ENCODE measurements at regions of chr12 and their contacts with region 1.

Region 1: GRCh38 chr12:53441040-53441833 is at the start of gene PRR13:
- DNase-seq: peak; percentile 88
- ATAC-seq: peak; percentile 98
- H3K4me3 Mint-ChIP-seq: peak within 1 kb of the TSS; percentile 93
- H3K27ac Mint-ChIP-seq: peak within 1 kb of the TSS; percentile 93
- H3K4me1 Mint-ChIP-seq: peaks cover 40% of the 10 kb centered on the region
- H3K27me3 Mint-ChIP-seq: no peaks in the 10 kb centered on the region
- CTCF ChIP-seq: no peak
- total RNA-seq, gene PRR13: 266 and 288 TPM in 2 replicates

Region 2: DNA sequence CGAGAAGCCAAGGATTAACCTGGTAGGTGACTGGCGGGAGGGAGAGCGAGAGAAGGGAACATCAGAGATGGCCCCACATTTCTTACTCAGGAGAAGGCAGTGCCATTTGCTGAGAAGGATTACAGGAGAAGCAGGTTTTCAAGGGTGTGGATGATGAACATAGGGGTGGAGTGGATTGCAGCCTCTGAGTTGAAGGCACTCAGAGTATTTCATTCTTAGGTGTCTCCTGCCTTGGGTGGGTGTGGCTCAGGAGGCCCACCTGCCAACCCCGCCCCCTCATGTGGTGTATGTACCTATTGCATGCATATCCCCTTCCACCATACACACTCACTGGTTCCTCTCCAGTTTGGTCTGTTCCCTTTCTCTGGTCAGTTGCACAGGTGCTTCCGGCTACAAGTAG is 166.8 kb before region 1 on chr12:
- CTCF ChIA-PET with region 1: no interaction called
- POLR2A ChIA-PET with region 1: no interaction called
- intact Hi-C with region 1: no loop called
- DNase-seq: no peak
- ATAC-seq: no peak
- H3K4me3 Mint-ChIP-seq: no peak overlapping the region
- H3K27ac Mint-ChIP-seq: no peak overlapping the region
- H3K4me1 Mint-ChIP-seq: no peaks in the 10 kb centered on the region
- H3K27me3 Mint-ChIP-seq: no peaks in the 10 kb centered on the region
- CTCF ChIP-seq: no peak

Region 3: DNA sequence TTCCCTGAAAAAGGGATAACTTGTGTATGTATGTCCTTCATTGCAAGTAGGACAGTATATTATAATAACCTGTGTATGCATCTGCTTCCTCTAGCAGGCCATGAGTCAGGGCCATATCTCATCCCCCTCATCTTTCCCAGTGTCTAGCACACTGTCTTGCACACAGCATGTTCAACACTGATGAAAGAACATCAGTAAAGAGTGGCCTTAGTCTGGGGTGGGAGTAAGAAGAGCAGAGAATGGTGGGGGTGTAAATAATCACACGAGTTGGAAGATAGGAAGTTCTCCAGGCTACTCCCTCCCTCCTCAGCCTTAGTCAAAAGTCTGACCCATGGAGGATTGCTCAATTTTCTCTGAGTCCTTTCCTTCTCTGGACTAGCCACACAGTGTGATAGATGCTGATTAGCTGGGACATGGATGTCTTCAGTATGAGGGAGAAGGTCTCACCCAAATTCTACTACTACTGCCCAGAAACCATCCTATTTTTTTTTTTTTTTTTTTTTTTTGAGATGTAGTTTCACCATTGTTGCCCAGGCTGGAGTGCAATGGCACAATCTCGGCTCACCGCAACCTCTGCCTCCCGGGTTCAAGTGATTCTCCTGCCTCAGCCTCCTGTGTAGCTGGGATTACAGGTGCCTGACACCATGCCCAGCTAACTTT is 75.9 kb before region 1 on chr12:
- CTCF ChIA-PET with region 1: no interaction called
- POLR2A ChIA-PET with region 1: no interaction called
- intact Hi-C with region 1: loop called (anchors 1 kb)
- DNase-seq: no peak
- ATAC-seq: no peak
- H3K4me3 Mint-ChIP-seq: peak overlapping the region; percentile 77
- H3K27ac Mint-ChIP-seq: peak overlapping the region; percentile 90
- H3K4me1 Mint-ChIP-seq: peaks cover 12% of the 10 kb centered on the region
- H3K27me3 Mint-ChIP-seq: no peaks in the 10 kb centered on the region
- CTCF ChIP-seq: no peak

Region 4: DNA sequence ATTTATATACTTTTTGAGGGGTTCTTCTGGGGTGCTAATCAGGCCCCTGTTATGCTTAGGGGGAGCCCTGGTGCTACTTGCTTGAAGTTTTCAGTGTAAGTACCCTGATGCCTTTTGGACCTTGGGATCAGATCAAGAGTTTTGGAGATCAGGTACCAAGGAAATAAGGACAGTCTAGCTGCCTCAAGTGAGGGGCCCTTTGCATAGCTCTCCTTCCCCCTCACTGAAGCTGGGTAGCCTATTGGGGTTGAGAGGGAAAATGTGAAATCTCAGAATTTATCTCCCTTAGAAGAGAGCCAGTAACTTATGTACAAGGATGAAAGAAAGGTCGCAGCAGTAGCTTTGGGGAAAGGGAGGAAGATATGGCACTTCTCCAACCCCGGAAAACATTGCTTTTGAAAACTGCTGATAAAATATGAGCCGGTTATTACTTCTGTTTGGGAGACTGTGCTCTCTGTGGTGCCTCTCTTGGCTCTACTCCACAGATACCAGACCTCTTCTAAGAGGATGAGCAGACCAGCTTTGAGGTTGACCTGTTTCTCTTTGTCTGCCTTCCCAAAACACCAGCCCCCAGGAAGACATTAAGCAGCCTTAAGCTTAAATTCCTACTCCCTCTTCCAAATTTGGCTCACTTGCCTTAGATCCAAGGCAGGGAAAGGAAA is 26.4 kb before region 1 on chr12:
- CTCF ChIA-PET with region 1: no interaction called
- POLR2A ChIA-PET with region 1: interaction called, 3 read pairs
- intact Hi-C with region 1: loop called (anchors 1 kb)
- DNase-seq: no peak
- ATAC-seq: no peak
- H3K4me3 Mint-ChIP-seq: no peak overlapping the region
- H3K27ac Mint-ChIP-seq: peak overlapping the region; percentile 35
- H3K4me1 Mint-ChIP-seq: peaks cover 60% of the 10 kb centered on the region
- H3K27me3 Mint-ChIP-seq: no peaks in the 10 kb centered on the region
- CTCF ChIP-seq: no peak

Region 5: GRCh38 chr12:53451661-53452158 is 10.5 kb after region 1 on chr12 and contains the start of gene PCBP2:
- CTCF ChIA-PET with region 1: no interaction called
- POLR2A ChIA-PET with region 1: interaction called, 8 read pairs
- intact Hi-C with region 1: loop called (anchors 1 kb)
- DNase-seq: peak; percentile 92
- ATAC-seq: peak; percentile 92
- H3K4me3 Mint-ChIP-seq: peak within 1 kb of the TSS; percentile 99
- H3K27ac Mint-ChIP-seq: peak within 1 kb of the TSS; percentile 99
- H3K4me1 Mint-ChIP-seq: peaks cover 30% of the 10 kb centered on the region
- H3K27me3 Mint-ChIP-seq: no peaks in the 10 kb centered on the region
- CTCF ChIP-seq: no peak
- total RNA-seq, gene PCBP2: 841 and 853 TPM in 2 replicates

Region 6: GRCh38 chr12:53492830-53493611 is 51.8 kb after region 1 on chr12:
- CTCF ChIA-PET with region 1: no interaction called
- POLR2A ChIA-PET with region 1: interaction called, 4 read pairs
- intact Hi-C with region 1: loop called (anchors 1 kb)
- DNase-seq: peak; percentile 95
- ATAC-seq: peak; percentile 92
- H3K4me3 Mint-ChIP-seq: peak overlapping the region; percentile 87
- H3K27ac Mint-ChIP-seq: peak overlapping the region; percentile 84
- H3K4me1 Mint-ChIP-seq: peaks cover 21% of the 10 kb centered on the region
- H3K27me3 Mint-ChIP-seq: no peaks in the 10 kb centered on the region
- CTCF ChIP-seq: no peak